Caco-2 (cell line): ENCODE measurements at regions of chr20 and their contacts with region 1.

Region 1: DNA sequence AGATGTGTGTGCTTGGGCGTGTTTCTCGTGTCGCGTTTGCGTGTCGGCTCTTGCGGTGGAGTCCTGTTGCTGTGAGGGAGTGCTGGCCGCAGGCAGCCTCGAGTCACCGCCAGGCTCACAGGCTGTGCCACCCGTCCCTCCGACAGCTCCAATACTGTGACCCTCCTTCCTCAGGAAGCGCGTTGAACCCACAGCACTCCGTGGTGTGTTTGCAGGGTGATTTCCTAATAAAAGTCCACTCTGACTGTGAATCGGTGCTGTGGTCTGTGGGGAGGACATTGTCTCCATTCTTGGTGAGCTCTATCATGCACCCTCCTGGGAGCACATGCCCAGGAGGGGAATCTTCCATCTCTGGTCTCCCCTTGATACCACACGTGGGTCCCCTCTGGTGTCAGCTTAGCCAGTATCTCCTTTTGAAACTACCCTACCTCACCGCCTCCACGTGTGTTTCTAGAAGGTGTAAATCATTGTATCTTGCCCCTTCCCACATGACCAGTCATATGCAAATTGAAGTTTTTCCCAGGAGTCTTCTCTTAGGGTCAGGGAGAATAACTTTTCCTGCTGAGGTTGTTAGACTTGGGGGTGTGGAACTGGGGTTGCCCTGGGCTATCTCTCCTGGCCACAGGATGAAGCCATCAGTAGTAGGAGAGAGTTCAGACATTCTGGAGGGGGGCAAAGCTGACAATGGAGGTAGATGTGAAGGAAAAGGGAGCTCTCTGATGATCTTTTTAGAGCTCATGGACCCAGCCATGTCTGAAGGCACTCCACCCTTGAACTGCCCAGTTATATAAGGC is 13.3 kb upstream of the PCMTD2 start:
- DNase-seq: peak in 1 of 2 experiments; percentile 27
- H3K4me3 ChIP-seq: no peak overlapping the region
- H3K4me3 Mint-ChIP-seq: no peak overlapping the region
- H3K27ac Mint-ChIP-seq: no peak overlapping the region
- H3K4me1 ChIP-seq: peaks cover 11% of the 10 kb centered on the region
- H3K4me1 Mint-ChIP-seq: peaks cover 11% of the 10 kb centered on the region
- H3K27me3 ChIP-seq: no peaks in the 10 kb centered on the region
- H3K27me3 Mint-ChIP-seq: peaks cover 12% of the 10 kb centered on the region
- CTCF ChIP-seq: no peak

Region 2: DNA sequence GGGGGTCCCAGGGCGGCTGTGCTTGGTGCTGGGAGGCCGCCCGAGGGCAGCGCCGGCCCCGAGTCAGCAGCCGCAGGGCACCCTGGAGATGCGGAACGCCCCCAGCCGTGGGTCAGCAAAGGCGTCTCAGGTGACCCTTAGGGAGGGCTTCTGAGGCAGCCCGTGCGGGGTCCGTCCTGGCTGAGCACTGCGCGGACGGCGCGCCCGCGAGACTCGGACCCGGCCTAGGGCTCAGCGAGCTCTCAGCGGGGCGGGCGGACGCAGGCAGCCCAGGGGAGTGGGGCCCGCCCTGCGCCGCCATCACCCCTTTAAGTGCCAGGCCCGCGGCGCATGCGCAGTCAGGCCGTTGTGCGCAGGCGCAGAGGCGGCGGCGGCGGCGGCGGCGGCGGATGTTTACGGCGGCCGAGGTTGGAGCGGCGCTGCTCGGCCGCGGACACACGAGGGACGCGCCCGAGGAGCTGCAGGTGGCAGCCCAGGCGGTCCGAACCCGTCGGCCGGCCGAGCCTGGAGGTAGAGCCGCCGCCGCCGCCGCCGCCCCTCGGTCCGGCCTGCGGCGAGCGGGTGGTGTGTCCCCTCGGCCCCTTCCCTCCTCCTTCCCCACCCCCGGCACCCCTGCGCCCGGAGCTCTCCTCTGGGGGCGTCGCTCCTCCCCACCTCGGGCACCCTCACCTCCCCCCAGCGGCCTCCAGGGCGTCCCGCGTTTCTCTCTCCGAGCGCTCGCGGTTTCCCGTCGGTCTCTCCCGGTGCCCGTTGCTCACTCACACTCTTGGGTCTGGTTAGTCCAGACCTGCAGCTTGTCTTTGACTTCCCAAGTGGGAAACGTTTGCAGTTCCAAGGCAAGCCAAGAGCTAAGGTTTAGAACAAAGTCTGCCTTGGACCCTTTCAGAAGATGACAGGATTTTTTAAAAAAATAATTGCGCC is 13.4 kb after region 1 on chr20 and contains the start of gene PCMTD2:
- CTCF ChIA-PET with region 1: interaction called, 5 read pairs
- POLR2A ChIA-PET with region 1: interaction called, 13 read pairs
- intact Hi-C with region 1: no loop called
- DNase-seq: peak; percentile 91 to 99
- H3K4me3 ChIP-seq: peak within 1 kb of the TSS; percentile 80
- H3K4me3 Mint-ChIP-seq: peak within 1 kb of the TSS; percentile 95
- H3K27ac Mint-ChIP-seq: peak within 1 kb of the TSS; percentile 91
- H3K4me1 ChIP-seq: peaks cover 6% of the 10 kb centered on the region; the same call in 1 of the 2 replicates
- H3K4me1 Mint-ChIP-seq: peaks cover 10% of the 10 kb centered on the region
- H3K27me3 ChIP-seq: no peaks in the 10 kb centered on the region
- H3K27me3 Mint-ChIP-seq: no peaks in the 10 kb centered on the region
- CTCF ChIP-seq: peak; percentile 30 to 48
- total RNA-seq, gene PCMTD2: 79.5 and 101 TPM in 2 replicates